Adrenal gland (tissue), 19 donors: ENCODE measurements at regions of chr10 and their contacts with region 1.

Region 1: DNA sequence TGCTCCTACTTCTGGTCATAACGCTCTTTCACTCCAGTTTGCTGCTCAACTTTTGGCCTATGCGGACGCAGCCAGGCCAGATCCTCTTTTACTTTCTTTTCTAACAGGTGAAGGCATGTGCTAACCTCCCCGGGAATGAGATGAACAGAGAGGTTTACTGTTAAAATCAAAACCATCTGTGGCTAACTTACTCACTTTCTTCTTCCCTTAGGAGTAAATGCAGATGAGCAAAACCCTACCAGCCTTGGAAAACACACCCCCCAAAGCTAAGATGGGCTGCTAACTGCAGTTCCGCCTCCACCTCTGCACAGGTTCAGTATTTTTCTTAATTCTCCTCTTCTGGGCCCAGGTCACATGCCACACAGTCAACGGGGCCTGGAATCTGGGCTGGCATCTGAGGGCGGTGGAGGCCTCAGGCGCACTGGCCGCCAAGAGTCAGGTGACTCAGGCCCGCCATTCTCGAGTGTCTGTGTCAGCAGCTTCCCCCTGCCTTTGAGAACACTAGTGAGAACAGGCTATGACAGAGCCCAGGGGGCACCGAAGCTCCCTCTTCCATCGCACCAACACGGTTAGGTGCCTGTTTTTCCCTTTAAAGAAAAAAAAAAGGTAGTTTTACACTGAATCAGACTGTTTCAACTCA is 11.1 kb downstream of the FAM53B start:
- DNase-seq: peak; percentile 78 to 92 (median 88)
- H3K4me3 ChIP-seq: no peak overlapping the region
- H3K27ac ChIP-seq: peak overlapping the region; percentile 62 to 95 (median 82)
- H3K4me1 ChIP-seq: peaks cover 79 to 98% of the 10 kb centered on the region in 2 donors
- H3K27me3 ChIP-seq: no peaks in the 10 kb centered on the region
- CTCF ChIP-seq: no peak
- POLR2A ChIP-seq: peak in 1 of 2 donors; percentile 54

Region 2: DNA sequence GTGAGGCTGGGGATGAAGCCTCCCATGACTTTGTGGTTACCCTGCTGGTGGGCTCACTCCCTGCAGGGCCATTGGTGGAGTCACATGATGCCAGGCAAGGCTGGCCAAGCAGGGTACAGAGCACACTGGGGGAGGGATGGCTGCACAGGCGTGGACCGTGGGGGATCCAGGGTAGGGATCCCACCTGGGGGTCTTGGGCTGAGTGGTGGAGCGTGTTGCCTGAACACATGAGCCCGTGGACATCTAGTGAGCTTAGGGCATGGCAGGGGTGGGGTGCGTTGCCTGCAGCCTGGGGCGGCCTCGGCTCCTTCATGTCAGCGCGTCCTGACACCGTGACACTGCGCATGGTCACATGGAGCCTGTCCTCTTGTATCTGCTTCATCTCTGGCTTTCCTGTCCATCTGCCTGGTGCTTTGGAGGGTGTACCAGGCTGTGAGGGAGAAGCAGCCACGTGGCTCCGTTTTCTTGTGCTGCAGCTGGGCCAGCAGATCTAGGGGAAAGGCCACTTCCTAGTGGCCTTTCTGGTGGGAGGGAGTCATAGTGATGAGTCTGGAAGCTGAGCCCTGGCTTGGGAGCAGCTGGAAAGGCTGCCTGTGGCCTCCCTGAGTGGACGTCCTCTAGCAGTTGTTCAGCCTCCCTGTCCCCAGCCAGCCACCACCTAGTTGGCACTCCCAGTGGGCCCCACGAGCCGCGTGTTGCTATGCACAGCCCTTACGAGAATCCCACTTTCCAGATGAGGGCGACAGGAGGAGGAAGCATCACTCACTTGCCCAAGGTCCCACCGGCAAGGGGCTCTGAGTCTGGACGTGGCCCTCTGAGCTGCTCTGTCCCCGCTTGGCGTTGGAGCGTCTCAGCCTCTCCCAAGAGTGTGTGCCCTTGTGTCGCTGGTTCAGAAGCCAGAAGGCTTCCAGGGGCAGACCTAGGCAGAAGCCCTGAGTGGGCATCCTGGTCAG is 175.1 kb before region 1 on chr10:
- intact Hi-C with region 1: no loop called
- DNase-seq: peak in 1 of 7 donors; percentile 25
- H3K4me3 ChIP-seq: no peak overlapping the region
- H3K27ac ChIP-seq: peak overlapping the region in 3 of 5 donors; percentile 7 to 94 (median 67)
- H3K4me1 ChIP-seq: peaks cover 9 to 24% of the 10 kb centered on the region in 2 donors
- H3K27me3 ChIP-seq: no peaks in the 10 kb centered on the region
- CTCF ChIP-seq: no peak
- POLR2A ChIP-seq: no peak

Region 3: GRCh38 chr10:124626759-124627380 is 106.2 kb before region 1 on chr10:
- intact Hi-C with region 1: loop called in 1 of 2 experiments (anchors 5 kb)
- DNase-seq: no peak
- H3K4me3 ChIP-seq: no peak overlapping the region
- H3K27ac ChIP-seq: peak overlapping the region in 3 of 5 donors; percentile 13 to 70 (median 46)
- H3K4me1 ChIP-seq: peaks cover 14 to 56% of the 10 kb centered on the region in 2 donors
- H3K27me3 ChIP-seq: no peaks in the 10 kb centered on the region
- CTCF ChIP-seq: no peak
- POLR2A ChIP-seq: no peak

Region 4: GRCh38 chr10:124647421-124648130 is 85.5 kb before region 1 on chr10:
- intact Hi-C with region 1: loop called in 1 of 2 experiments (anchors 10 kb)
- DNase-seq: peak in 6 of 7 donors; percentile 65 to 85 (median 77)
- H3K4me3 ChIP-seq: no peak overlapping the region
- H3K27ac ChIP-seq: peak overlapping the region; percentile 49 to 93 (median 87)
- H3K4me1 ChIP-seq: peaks cover 51 to 76% of the 10 kb centered on the region in 2 donors
- H3K27me3 ChIP-seq: no peaks in the 10 kb centered on the region
- CTCF ChIP-seq: peak in 4 of 6 experiments; percentile 27 to 43 (median 41)
- POLR2A ChIP-seq: no peak

Region 5: GRCh38 chr10:124701435-124701834 is 31.6 kb before region 1 on chr10:
- intact Hi-C with region 1: loop called in 1 of 2 experiments (anchors 5 kb)
- DNase-seq: peak; percentile 90 to 98 (median 97)
- H3K4me3 ChIP-seq: no peak overlapping the region
- H3K27ac ChIP-seq: peak overlapping the region; percentile 75 to 98 (median 95)
- H3K4me1 ChIP-seq: peaks cover 75 to 100% of the 10 kb centered on the region in 2 donors
- H3K27me3 ChIP-seq: no peaks in the 10 kb centered on the region
- CTCF ChIP-seq: no peak
- POLR2A ChIP-seq: peak in 1 of 2 donors; percentile 61